G401 (cell line): ENCODE measurements at regions of chr16 and their contacts with region 1.

Region 1: DNA sequence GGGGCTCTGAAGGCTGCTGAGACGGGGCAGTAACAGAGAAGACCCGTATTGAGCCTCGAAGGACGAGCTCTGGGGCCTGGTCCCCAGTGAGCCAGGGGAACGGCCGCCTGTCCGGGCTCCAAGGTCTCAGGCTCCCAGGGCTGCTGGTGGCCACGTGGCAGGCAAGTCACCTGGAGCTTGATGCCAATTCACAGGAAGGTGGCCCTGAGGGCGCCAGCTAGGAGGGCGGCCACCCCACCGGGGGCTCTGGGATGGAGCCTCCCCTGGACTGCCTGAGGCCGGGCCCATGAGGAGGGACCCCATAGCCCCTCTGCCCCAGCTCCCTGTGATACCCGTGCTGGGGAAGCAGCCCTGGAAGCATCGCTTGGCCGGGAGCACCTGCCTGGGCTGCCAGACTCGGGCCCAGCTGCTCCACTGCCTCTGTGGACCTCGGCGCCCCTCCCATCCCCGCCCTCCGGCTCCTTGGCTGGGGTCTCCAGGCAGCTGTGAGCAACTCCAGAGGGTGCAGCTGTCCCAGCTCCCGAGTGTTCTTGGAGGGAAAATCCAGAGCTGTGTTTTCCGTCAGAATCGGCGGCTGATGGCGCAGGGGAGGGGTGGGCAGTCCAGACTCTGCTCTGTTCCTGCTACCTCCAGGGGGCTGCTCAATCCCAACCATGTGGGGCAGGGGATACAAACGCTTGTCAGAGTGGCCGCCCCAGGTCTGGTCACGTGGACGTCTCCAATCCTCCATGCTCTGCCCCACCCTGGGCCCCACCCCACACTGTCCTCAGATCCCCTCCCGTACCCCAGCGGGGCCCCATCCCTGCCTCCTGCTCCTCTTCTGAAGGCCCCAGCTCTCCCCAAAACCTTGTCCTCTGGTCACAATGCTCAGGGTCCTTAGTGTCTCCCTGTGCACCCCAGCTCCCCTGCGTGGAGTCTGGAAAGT is 67.2 kb upstream of the GNG13 start:
- DNase-seq: no peak

Region 2: GRCh38 chr16:720990-721764 is 146.5 kb before region 1 on chr16 and contains the start of gene ANTKMT:
- in situ Hi-C with region 1: loop called (anchors 25 kb)
- DNase-seq: peak; percentile 81
- total RNA-seq, gene ANTKMT: 45.5 and 47.6 TPM in 2 replicates

Region 3: DNA sequence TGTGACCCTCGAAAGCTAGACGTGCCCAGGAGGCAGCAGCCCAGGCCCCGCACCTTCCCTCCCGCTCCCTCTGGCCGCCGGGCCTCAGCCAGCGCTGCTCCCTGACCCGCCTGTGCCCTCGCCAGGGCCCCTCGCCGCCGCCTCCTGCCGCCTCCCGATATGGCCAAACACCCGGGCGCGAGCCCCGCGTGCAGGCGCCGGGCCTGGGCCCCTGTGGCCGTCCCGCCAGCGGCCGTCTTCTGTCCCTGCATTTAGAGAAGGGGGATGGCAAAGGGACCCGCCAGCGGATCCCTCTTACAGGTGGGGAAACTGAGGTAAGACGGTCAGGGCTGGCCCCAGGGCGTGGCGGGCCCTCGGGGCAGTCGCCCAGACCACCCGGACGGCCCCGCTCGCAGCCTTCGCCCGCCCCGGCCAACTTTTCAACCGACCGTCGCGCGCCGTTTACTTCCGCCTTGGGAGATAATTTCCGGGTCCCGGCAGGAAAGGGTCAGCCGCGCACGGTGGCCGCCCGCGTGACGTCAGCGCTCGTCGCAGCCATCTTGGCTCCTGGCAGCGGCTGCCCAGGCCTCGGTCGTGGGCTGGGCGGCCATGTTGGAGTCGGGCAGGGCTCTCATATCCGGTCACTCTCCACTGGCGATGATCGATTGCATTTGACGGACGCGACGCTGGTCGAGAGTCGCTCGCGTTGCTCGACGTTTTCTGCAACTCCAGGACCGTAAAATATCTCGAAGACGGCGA is 60.2 kb before region 1 on chr16:
- in situ Hi-C with region 1: no loop called
- DNase-seq: peak; percentile 91

Region 4: DNA sequence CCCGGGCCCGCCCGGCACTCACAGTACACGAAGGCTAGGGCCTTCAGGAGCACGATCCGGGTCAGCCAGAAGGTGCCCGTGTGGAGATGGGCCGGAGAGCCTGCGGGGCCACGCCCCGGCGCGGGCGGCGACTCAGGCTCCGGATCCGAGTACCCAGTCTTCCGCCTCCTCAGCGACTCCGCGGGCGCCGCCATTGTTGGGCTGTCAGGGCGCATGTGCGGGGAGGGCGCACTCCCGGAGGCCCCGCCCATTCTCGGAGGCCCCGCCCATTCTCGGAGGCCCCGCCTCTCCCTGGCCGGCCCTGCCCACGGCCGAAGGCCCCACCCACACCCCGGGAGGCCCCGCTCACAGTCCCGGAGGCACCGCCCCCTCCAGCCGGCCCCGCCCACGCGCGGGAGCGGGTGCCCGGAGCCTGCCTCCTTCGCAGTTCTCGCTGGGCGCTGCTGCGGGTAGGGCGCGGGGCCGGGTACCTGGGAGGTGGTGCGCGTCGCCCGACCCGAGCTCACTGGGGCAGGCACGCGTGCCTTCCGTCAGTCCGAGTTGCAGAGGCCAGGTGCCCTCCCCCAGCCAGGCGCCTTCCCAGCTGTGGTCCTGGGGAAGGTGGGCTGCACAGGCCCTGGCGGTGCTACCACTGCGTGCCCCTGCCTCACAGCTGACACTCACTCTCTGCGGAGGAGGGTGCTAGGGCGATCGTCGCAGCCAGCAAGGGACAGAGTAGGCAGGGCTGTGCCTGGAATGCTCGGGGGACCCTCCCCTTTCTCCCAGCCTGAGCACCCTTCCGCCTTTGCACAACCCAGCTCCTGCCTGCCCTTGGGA is 103.3 kb after region 1 on chr16 and contains the start of gene LMF1:
- in situ Hi-C with region 1: no loop called
- DNase-seq: peak; percentile 83
- total RNA-seq, gene LMF1: 25.9 and 34.1 TPM in 2 replicates

Region 5: GRCh38 chr16:1014771-1015495 is 147.2 kb after region 1 on chr16:
- in situ Hi-C with region 1: no loop called
- DNase-seq: no peak